ENCODE measurements at regions of chr12 and their contacts with region 1.

Region 1: GRCh38 chr12:85468356-85469157 is 188.5 kb downstream of the ALX1 start:
- DNase-seq: no peak
- ATAC-seq: peak in 1 of 4 donors; percentile 69
- H3K4me3 ChIP-seq: peak overlapping the region; percentile 60
- H3K27ac ChIP-seq: no peak overlapping the region
- H3K4me1 ChIP-seq: no peaks in the 10 kb centered on the region
- H3K27me3 ChIP-seq: no peaks in the 10 kb centered on the region
- CTCF ChIP-seq: peak; percentile 59

Region 2: DNA sequence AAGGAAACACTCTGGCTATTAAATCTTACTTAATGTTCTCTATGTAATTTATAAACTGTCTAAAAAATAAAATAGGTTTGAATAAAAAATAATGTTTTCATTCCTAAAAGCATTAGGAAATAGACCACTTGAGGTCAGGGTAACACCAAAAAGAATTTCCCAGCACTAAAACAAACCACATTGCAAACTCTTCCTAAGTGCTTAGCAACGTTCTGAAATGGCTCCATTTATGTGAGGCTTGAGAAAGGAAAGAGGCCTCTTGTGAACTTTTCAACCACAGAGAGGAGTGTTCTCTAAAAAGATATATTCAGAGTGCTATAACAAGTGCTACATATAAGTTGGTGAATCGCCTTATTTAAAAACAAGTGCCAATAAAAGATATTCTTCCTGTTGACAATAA is 145.8 kb before region 1 on chr12:
- intact Hi-C with region 1: no loop called
- DNase-seq: no peak
- ATAC-seq: no peak
- H3K4me3 ChIP-seq: no peak overlapping the region
- H3K27ac ChIP-seq: no peak overlapping the region
- H3K4me1 ChIP-seq: no peaks in the 10 kb centered on the region
- H3K27me3 ChIP-seq: no peaks in the 10 kb centered on the region
- CTCF ChIP-seq: no peak

Region 3: GRCh38 chr12:85872497-85873091 is 404.0 kb after region 1 on chr12:
- intact Hi-C with region 1: loop called (anchors 5 kb)
- DNase-seq: no peak
- ATAC-seq: no peak
- H3K4me3 ChIP-seq: no peak overlapping the region
- H3K27ac ChIP-seq: no peak overlapping the region
- H3K4me1 ChIP-seq: no peaks in the 10 kb centered on the region
- H3K27me3 ChIP-seq: no peaks in the 10 kb centered on the region
- CTCF ChIP-seq: peak; percentile 60

Region 4: GRCh38 chr12:85920324-85920947 is 451.9 kb after region 1 on chr12:
- intact Hi-C with region 1: loop called (anchors 5 kb)
- DNase-seq: no peak
- ATAC-seq: no peak
- H3K4me3 ChIP-seq: no peak overlapping the region
- H3K27ac ChIP-seq: no peak overlapping the region
- H3K4me1 ChIP-seq: no peaks in the 10 kb centered on the region
- H3K27me3 ChIP-seq: no peaks in the 10 kb centered on the region
- CTCF ChIP-seq: peak; percentile 61